HepG2 (cell line): ENCODE measurements at regions of chr3 and their contacts with region 1.

Region 1: GRCh38 chr3:70531063-70531657 is 218.7 kb upstream of the MDFIC2 start:
- DNase-seq: peak; percentile 4
- ATAC-seq: no peak
- H3K4me3 ChIP-seq: no peak overlapping the region
- H3K27ac ChIP-seq: no peak overlapping the region
- H3K4me1 ChIP-seq: no peaks in the 10 kb centered on the region
- H3K27me3 ChIP-seq: peaks cover 0 to 1% of the 10 kb centered on the region in 2 experiments; a peak in 1 of 5 replicates
- CTCF ChIP-seq: peak; percentile 44
- EP300 ChIP-seq: no peak
- POLR2A ChIP-seq: no peak
- RAD21 ChIP-seq: no peak

Region 2: DNA sequence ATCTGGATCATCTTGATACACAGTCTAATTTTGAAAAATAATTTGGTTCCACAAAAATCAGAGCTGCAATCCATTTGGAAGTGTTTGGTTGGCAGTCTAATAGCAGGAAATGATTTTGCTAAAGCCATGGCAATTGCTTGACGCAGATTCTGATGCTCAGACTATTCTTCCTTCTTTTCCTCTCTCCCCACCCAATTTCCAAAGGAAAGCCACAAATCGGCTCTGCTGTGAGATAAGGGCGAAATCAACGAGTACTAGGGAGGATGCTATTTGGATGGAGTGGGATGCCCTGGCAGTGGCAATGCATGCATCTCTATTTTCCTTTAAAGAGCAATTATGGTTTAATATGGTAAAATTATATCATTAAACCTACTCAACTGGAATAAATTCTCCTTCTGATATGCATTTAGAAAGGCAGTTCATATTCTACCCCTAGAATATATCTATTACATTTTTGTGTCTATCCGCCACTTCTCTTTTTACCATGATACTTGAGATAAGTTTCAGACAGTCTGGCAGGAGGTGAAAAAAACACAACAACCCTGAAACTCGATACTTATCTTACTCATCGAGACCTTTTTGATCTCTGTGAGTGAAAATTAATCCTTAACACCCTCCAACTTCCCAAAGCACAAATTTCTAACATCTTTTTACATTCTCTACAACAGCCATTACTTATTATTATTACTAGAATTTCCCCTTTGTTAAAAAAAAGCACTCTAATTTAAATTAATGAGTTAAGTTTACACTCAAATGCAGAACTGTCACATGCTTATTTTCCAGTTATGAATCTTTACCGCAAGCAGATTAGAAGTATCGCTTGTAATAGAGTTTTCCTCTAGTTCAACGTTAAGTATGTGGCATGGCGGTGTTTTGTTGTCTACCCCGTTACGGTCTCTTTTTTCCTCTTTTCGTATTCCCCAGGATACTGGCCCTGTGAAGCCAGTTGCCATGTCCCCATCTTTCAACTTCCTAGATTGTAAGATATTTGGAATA is 619.1 kb after region 1 on chr3:
- CTCF ChIA-PET with region 1: no interaction called
- POLR2A ChIA-PET with region 1: no interaction called
- in situ Hi-C with region 1: no loop called
- intact Hi-C with region 1: loop called (anchors 5 kb)
- DNase-seq: no peak
- ATAC-seq: no peak
- H3K4me3 ChIP-seq: no peak overlapping the region
- H3K27ac ChIP-seq: no peak overlapping the region
- H3K4me1 ChIP-seq: peaks cover 50% of the 10 kb centered on the region
- H3K27me3 ChIP-seq: no peaks in the 10 kb centered on the region
- CTCF ChIP-seq: no peak
- EP300 ChIP-seq: no peak
- POLR2A ChIP-seq: no peak
- RAD21 ChIP-seq: no peak

Region 3: GRCh38 chr3:71681224-71681668 is 1150.1 kb after region 1 on chr3:
- CTCF ChIA-PET with region 1: no interaction called
- POLR2A ChIA-PET with region 1: no interaction called
- in situ Hi-C with region 1: no loop called
- intact Hi-C with region 1: loop called (anchors 1 kb)
- DNase-seq: peak; percentile 39
- ATAC-seq: peak; percentile 89
- H3K4me3 ChIP-seq: no peak overlapping the region
- H3K27ac ChIP-seq: no peak overlapping the region
- H3K4me1 ChIP-seq: no peaks in the 10 kb centered on the region
- H3K27me3 ChIP-seq: peaks cover 0 to 13% of the 10 kb centered on the region in 2 experiments; a peak in 2 of 5 replicates
- CTCF ChIP-seq: peak; percentile 74
- EP300 ChIP-seq: no peak
- POLR2A ChIP-seq: no peak
- RAD21 ChIP-seq: peak; percentile 55; the same call in 1 of the 2 replicates